Calu3 (cell line): ENCODE measurements at regions of chr5 and their contacts with region 1.

Region 1: GRCh38 chr5:43073597-43074546 is 33.8 kb upstream of the ANXA2R start:
- DNase-seq: peak; percentile 36
- H3K4me3 Mint-ChIP-seq: no peak overlapping the region
- H3K27ac Mint-ChIP-seq: peak overlapping the region; percentile 10
- H3K4me1 Mint-ChIP-seq: peaks cover 34% of the 10 kb centered on the region
- H3K27me3 Mint-ChIP-seq: no peaks in the 10 kb centered on the region
- CTCF ChIP-seq: peak; percentile 51

Region 2: GRCh38 chr5:42807722-42808447 is 266.0 kb before region 1 on chr5:
- CTCF ChIA-PET with region 1: no interaction called
- intact Hi-C with region 1: no loop called
- DNase-seq: no peak
- H3K4me3 Mint-ChIP-seq: no peak overlapping the region
- H3K27ac Mint-ChIP-seq: no peak overlapping the region
- H3K4me1 Mint-ChIP-seq: peaks cover 14% of the 10 kb centered on the region
- H3K27me3 Mint-ChIP-seq: no peaks in the 10 kb centered on the region
- CTCF ChIP-seq: no peak

Region 3: GRCh38 chr5:43105369-43106289 is 31.8 kb after region 1 on chr5:
- CTCF ChIA-PET with region 1: no interaction called
- intact Hi-C with region 1: loop called (anchors 2 kb)
- DNase-seq: peak; percentile 92
- H3K4me3 Mint-ChIP-seq: peak overlapping the region; percentile 67
- H3K27ac Mint-ChIP-seq: peak overlapping the region; percentile 21
- H3K4me1 Mint-ChIP-seq: no peaks in the 10 kb centered on the region
- H3K27me3 Mint-ChIP-seq: no peaks in the 10 kb centered on the region
- CTCF ChIP-seq: peak; percentile 99